ENCODE measurements at regions of chr3 and their contacts with region 1.

Region 1: DNA sequence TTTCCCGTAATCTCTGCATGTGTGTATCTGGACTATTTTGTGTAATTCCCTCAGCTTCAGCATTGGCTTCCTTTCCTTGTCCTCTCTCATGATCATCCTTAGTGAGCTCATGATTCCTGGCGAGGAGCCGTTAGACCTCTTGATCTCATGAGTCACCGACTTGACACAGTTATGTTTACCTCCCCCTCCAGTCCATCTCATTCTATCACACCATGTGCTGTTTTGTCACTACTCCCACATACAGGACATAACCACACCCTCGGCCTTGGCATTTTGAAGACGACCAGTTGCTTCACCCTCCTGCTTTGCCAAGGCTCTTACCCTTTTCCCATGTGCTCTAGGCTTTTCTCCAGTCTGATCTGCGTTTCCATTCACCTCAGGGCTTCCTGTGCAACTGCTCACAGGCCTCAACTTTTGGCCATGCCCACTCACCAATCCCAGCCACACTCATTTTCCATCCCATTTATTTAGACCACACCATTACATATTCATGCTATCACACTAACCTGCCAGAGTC is 41.5 kb downstream of the CP start:
- DNase-seq: peak; percentile 87 to 98 (median 95)
- H3K4me3 ChIP-seq: no peak overlapping the region
- H3K27ac ChIP-seq: peak overlapping the region; percentile 5 to 89 (median 71)
- H3K4me1 ChIP-seq: peaks cover 3 to 12% of the 10 kb centered on the region in 2 donors
- H3K27me3 ChIP-seq: no peaks in the 10 kb centered on the region
- CTCF ChIP-seq: no peak
- POLR2A ChIP-seq: peak in 1 of 2 donors; percentile 41

Region 2: DNA sequence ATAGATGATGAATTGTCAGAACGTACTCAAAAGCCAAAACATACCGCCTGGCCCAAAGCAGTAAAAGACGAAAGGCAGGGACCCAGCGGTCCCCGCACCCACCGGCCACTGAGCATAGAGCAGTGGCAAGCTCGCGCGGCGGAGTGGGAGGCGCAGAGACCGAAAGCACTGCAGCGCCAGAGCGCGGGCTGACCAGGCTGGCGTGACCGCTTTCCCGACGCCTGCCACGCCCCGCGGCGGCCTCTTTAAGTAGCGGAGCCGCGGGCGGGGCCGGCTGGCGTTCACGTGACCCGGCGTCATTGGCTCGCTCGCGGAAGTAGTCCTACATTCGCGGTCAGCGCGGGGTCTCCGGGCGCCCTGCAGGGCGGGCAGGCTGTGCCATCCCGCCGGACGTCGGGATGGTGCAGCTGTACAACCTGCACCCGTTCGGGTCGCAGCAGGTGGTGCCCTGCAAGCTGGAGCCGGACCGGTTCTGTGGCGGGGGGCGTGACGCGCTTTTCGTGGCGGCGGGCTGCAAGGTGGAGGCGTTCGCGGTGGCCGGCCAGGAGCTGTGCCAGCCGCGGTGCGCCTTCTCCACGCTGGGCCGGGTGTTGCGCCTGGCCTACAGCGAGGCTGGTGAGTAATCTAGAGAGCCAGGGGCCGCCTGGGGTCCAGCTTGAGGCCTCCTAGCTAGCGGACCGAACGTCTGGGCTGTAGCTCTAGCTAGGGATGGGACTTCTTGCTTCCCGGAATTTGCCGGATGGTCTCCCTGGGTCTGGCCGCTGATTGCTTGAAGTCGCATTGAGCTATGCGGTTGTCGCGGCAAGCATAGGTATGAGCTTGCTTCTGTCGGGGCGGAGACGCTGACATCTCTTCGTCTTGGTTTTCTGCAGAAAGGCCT is 50.5 kb before region 1 on chr3 and contains the start of gene HPS3:
- intact Hi-C with region 1: loop called in 1 of 2 experiments (anchors 10 kb)
- DNase-seq: peak; percentile 88 to 96 (median 93)
- H3K4me3 ChIP-seq: peak within 1 kb of the TSS; percentile 33 to 74 (median 70)
- H3K27ac ChIP-seq: peak within 1 kb of the TSS in 4 of 5 donors; percentile 81 to 91 (median 86)
- H3K4me1 ChIP-seq: peaks cover 0 to 36% of the 10 kb centered on the region in 2 donors
- H3K27me3 ChIP-seq: no peaks in the 10 kb centered on the region
- CTCF ChIP-seq: no peak
- POLR2A ChIP-seq: peak; percentile 94 to 99
- total RNA-seq, gene HPS3: 20.2 to 38.2 (median 29.5) TPM

Measured in adrenal gland (tissue), 19 donors.